Calu3 (cell line): ENCODE measurements at regions of chr11 and their contacts with region 1.

Region 1: GRCh38 chr11:36258730-36259360 is 30.4 kb downstream of the COMMD9 start:
- DNase-seq: peak; percentile 76
- H3K4me3 Mint-ChIP-seq: no peak overlapping the region
- H3K27ac Mint-ChIP-seq: no peak overlapping the region
- H3K4me1 Mint-ChIP-seq: peaks cover 13% of the 10 kb centered on the region
- H3K27me3 Mint-ChIP-seq: peaks cover 70% of the 10 kb centered on the region
- CTCF ChIP-seq: peak; percentile 62

Region 2: GRCh38 chr11:36041988-36042611 is 216.7 kb before region 1 on chr11:
- CTCF ChIA-PET with region 1: no interaction called
- intact Hi-C with region 1: loop called (anchors 5 kb)
- DNase-seq: peak; percentile 6
- H3K4me3 Mint-ChIP-seq: no peak overlapping the region
- H3K27ac Mint-ChIP-seq: no peak overlapping the region
- H3K4me1 Mint-ChIP-seq: peaks cover 2% of the 10 kb centered on the region
- H3K27me3 Mint-ChIP-seq: no peaks in the 10 kb centered on the region
- CTCF ChIP-seq: peak; percentile 33

Region 3: GRCh38 chr11:36455658-36456111 is 196.8 kb after region 1 on chr11:
- CTCF ChIA-PET with region 1: no interaction called
- intact Hi-C with region 1: no loop called
- DNase-seq: peak; percentile 20
- H3K4me3 Mint-ChIP-seq: no peak overlapping the region
- H3K27ac Mint-ChIP-seq: no peak overlapping the region
- H3K4me1 Mint-ChIP-seq: peaks cover 35% of the 10 kb centered on the region
- H3K27me3 Mint-ChIP-seq: no peaks in the 10 kb centered on the region
- CTCF ChIP-seq: no peak